ENCODE measurements at regions of chr10 and their contacts with region 1.

Region 1: GRCh38 chr10:8338177-8338766 is 283.8 kb downstream of the GATA3 start:
- DNase-seq: no peak
- H3K4me3 Mint-ChIP-seq: peak overlapping the region; percentile 97
- H3K27ac Mint-ChIP-seq: peak overlapping the region; percentile 100
- H3K4me1 Mint-ChIP-seq: peaks cover 68% of the 10 kb centered on the region
- H3K27me3 Mint-ChIP-seq: no peaks in the 10 kb centered on the region

Region 2: GRCh38 chr10:8193546-8193945 is 144.7 kb before region 1 on chr10:
- intact Hi-C with region 1: no loop called
- DNase-seq: no peak
- H3K4me3 Mint-ChIP-seq: no peak overlapping the region
- H3K27ac Mint-ChIP-seq: no peak overlapping the region
- H3K4me1 Mint-ChIP-seq: peaks cover 12% of the 10 kb centered on the region
- H3K27me3 Mint-ChIP-seq: no peaks in the 10 kb centered on the region

Region 3: DNA sequence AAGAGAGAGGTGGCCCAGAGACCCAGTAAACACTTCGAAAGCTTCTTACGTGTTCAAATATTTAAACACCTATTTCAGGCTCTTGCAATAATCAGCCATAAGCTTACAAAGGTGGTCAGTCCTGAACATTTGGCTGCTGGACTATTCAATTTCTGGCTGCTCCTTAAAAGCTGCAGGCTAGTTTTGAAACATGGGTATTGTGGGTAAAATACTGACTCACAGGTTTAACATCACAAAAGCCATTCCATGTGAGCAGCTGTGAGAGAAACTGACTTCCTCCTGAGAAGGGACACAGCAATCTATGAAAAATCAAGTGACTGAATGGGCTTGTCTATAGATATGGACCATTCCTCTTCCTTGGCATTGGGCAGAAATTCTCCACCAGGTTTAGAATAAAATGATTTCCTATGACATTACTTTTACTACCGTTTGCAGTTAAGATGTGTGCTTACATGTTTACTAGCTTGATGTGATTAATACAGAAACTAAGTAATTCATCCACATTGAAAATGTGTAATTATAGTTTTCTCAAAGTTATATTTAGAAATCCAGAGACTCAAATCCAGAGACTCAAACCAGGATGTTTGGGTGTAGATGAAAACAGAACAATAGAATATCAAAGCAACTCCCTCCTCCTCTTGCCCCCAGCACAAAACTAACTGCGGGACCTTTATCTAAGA is 31.4 kb before region 1 on chr10:
- intact Hi-C with region 1: no loop called
- DNase-seq: no peak
- H3K4me3 Mint-ChIP-seq: no peak overlapping the region
- H3K27ac Mint-ChIP-seq: peak overlapping the region; percentile 73
- H3K4me1 Mint-ChIP-seq: peaks cover 41% of the 10 kb centered on the region
- H3K27me3 Mint-ChIP-seq: no peaks in the 10 kb centered on the region

Region 4: DNA sequence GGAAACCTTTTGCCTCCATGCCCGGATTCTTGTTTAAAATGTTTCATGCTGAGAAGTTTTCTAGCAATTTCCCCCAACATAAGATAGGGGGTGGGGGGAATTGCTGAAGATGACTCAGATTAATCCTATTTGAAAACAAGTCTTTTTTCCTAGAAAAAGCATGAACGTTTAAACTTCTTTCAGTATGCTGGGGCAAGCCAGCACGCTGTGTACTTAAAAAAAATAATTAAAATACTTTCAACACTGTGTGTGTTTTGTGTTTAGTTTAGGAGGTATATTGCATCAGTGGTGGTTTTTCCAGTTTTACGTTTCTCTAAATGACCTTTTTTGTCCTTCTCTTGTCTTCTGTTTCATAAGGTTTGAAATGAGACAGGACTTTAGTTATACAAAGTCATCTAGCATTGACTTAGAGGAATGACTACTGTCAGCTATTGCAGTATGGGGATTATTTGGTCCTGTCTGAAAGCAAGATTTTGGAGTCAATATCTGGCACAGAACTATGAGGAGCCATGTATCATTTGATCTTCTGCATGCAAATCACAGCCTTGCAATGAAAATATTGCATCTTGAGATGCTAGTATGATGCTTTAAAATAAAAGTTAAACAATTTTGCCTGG is 12.2 kb after region 1 on chr10:
- intact Hi-C with region 1: loop called (anchors 1 kb)
- DNase-seq: no peak
- H3K4me3 Mint-ChIP-seq: peak overlapping the region; percentile 45
- H3K27ac Mint-ChIP-seq: peak overlapping the region; percentile 96
- H3K4me1 Mint-ChIP-seq: peaks cover 73% of the 10 kb centered on the region
- H3K27me3 Mint-ChIP-seq: no peaks in the 10 kb centered on the region

Region 5: GRCh38 chr10:8360365-8360764 is 22.1 kb after region 1 on chr10:
- intact Hi-C with region 1: loop called (anchors 1 kb)
- DNase-seq: peak; percentile 37
- H3K4me3 Mint-ChIP-seq: peak overlapping the region; percentile 70
- H3K27ac Mint-ChIP-seq: peak overlapping the region; percentile 88
- H3K4me1 Mint-ChIP-seq: peaks cover 79% of the 10 kb centered on the region
- H3K27me3 Mint-ChIP-seq: no peaks in the 10 kb centered on the region

Measured in activated T-helper 2 cell treated with anti-CD3 and anti-CD28 coated beads, Interferon-gamma antibody, Interleukin-2, Interleukin-4, amounts not matched to agents 10 μg/mL and 5 μg/mL and 100 μg/mL, durations not matched to agents 14 hours and 24 hours and 36 hours (primary cell).